B cell (primary cell): ENCODE measurements at regions of chr12 and their contacts with region 1.

Region 1: GRCh38 chr12:66693901-66694675 is 15.2 kb upstream of the GRIP1 start:
- DNase-seq: peak; percentile 80
- ATAC-seq: peak; percentile 73
- H3K4me3 ChIP-seq: no peak overlapping the region
- H3K4me3 Mint-ChIP-seq: no peak overlapping the region
- H3K27ac ChIP-seq: no peak overlapping the region
- H3K27ac Mint-ChIP-seq: no peak overlapping the region
- H3K4me1 ChIP-seq: peaks cover 7 to 10% of the 10 kb centered on the region in 2 donors
- H3K4me1 Mint-ChIP-seq: peaks cover 11% of the 10 kb centered on the region
- H3K27me3 ChIP-seq: no peaks in the 10 kb centered on the region
- H3K27me3 Mint-ChIP-seq: peaks cover 5% of the 10 kb centered on the region
- CTCF ChIP-seq: peak; percentile 84

Region 2: GRCh38 chr12:66269757-66270383 is 424.2 kb before region 1 on chr12:
- CTCF ChIA-PET with region 1: interaction called, 106 read pairs
- POLR2A ChIA-PET with region 1: no interaction called
- intact Hi-C with region 1: loop called (anchors 1 kb)
- DNase-seq: peak; percentile 42
- ATAC-seq: peak; percentile 31
- H3K4me3 ChIP-seq: no peak overlapping the region
- H3K4me3 Mint-ChIP-seq: no peak overlapping the region
- H3K27ac ChIP-seq: no peak overlapping the region
- H3K27ac Mint-ChIP-seq: no peak overlapping the region
- H3K4me1 ChIP-seq: peaks cover 0 to 6% of the 10 kb centered on the region in 2 donors
- H3K4me1 Mint-ChIP-seq: no peaks in the 10 kb centered on the region
- H3K27me3 ChIP-seq: no peaks in the 10 kb centered on the region
- H3K27me3 Mint-ChIP-seq: peaks cover 4% of the 10 kb centered on the region
- CTCF ChIP-seq: peak; percentile 65

Region 3: GRCh38 chr12:66352197-66352596 is 341.9 kb before region 1 on chr12:
- CTCF ChIA-PET with region 1: interaction called, 109 read pairs
- POLR2A ChIA-PET with region 1: no interaction called
- intact Hi-C with region 1: no loop called
- DNase-seq: peak; percentile 29
- ATAC-seq: no peak
- H3K4me3 ChIP-seq: no peak overlapping the region
- H3K4me3 Mint-ChIP-seq: no peak overlapping the region
- H3K27ac ChIP-seq: no peak overlapping the region
- H3K27ac Mint-ChIP-seq: no peak overlapping the region
- H3K4me1 ChIP-seq: no peaks in the 10 kb centered on the region
- H3K4me1 Mint-ChIP-seq: no peaks in the 10 kb centered on the region
- H3K27me3 ChIP-seq: no peaks in the 10 kb centered on the region
- H3K27me3 Mint-ChIP-seq: no peaks in the 10 kb centered on the region
- CTCF ChIP-seq: peak; percentile 45

Region 4: DNA sequence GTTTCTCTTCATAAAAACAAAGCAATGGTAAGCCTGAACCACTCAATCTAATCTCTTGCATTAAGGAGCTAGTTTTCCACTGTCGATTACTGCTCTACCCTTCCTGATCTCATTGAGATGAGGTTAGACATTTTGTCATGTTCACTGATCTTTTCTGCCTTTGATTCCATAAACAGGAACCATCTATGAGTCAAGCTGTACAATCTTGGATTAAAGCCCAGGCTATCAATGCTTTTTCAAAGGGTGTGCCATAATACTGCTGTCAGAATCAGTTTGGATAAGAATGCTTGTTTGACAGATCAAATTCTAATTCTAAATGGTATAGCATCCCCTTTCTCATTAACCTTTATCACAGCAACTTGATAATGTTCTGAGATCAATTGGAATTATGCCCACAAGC is 31.4 kb before region 1 on chr12:
- CTCF ChIA-PET with region 1: interaction called, 5 read pairs
- POLR2A ChIA-PET with region 1: no interaction called
- intact Hi-C with region 1: loop called (anchors 1 kb)
- DNase-seq: no peak
- ATAC-seq: no peak
- H3K4me3 ChIP-seq: no peak overlapping the region
- H3K4me3 Mint-ChIP-seq: peak overlapping the region; percentile 35
- H3K27ac ChIP-seq: peak overlapping the region in 1 of 2 donors; percentile 26
- H3K27ac Mint-ChIP-seq: peak overlapping the region; percentile 39
- H3K4me1 ChIP-seq: peaks cover 30 to 37% of the 10 kb centered on the region in 2 donors
- H3K4me1 Mint-ChIP-seq: peaks cover 37% of the 10 kb centered on the region
- H3K27me3 ChIP-seq: no peaks in the 10 kb centered on the region
- H3K27me3 Mint-ChIP-seq: no peaks in the 10 kb centered on the region
- CTCF ChIP-seq: no peak

Region 5: GRCh38 chr12:66708704-66709456 is 14.8 kb after region 1 on chr12:
- CTCF ChIA-PET with region 1: interaction called, 34 read pairs
- POLR2A ChIA-PET with region 1: no interaction called
- intact Hi-C with region 1: no loop called
- DNase-seq: peak; percentile 31
- ATAC-seq: no peak
- H3K4me3 ChIP-seq: no peak overlapping the region
- H3K4me3 Mint-ChIP-seq: no peak overlapping the region
- H3K27ac ChIP-seq: no peak overlapping the region
- H3K27ac Mint-ChIP-seq: no peak overlapping the region
- H3K4me1 ChIP-seq: peaks cover 6 to 15% of the 10 kb centered on the region in 2 donors
- H3K4me1 Mint-ChIP-seq: peaks cover 16% of the 10 kb centered on the region
- H3K27me3 ChIP-seq: no peaks in the 10 kb centered on the region
- H3K27me3 Mint-ChIP-seq: no peaks in the 10 kb centered on the region
- CTCF ChIP-seq: peak; percentile 82